ENCODE measurements at regions of chr3 and their contacts with region 1.

Region 1: DNA sequence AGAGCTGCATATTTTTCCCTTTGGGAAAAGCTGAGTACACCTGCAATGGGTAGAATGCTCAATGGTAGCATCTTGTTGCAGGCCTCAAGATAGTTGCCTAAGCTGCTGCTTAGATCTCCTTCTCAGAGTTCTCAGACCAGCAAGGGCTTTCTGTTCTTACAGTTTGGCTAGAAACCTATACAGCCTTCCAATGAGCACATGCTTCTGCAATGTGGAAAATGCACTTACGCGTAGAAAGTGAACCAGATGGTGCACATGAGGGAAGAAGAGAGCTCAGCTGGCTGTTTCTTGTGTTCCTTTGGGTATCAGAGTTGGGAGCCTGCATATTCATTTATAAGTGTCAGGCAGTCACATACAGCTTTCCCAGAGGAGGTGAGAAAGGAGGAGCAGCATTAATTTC is 136.4 kb downstream of the B3GALNT1 start:
- DNase-seq: no peak
- ATAC-seq: no peak
- H3K4me3 Mint-ChIP-seq: no peak overlapping the region
- H3K27ac Mint-ChIP-seq: no peak overlapping the region
- H3K4me1 Mint-ChIP-seq: peaks cover 9% of the 10 kb centered on the region
- H3K27me3 Mint-ChIP-seq: no peaks in the 10 kb centered on the region

Region 2: GRCh38 chr3:160956806-160957205 is 12.0 kb before region 1 on chr3:
- CTCF ChIA-PET with region 1: interaction called, 12 read pairs
- POLR2A ChIA-PET with region 1: no interaction called
- DNase-seq: no peak
- ATAC-seq: peak; percentile 60
- H3K4me3 Mint-ChIP-seq: no peak overlapping the region
- H3K27ac Mint-ChIP-seq: no peak overlapping the region
- H3K4me1 Mint-ChIP-seq: no peaks in the 10 kb centered on the region
- H3K27me3 Mint-ChIP-seq: peaks cover 14% of the 10 kb centered on the region

Measured in activated CD8-positive, alpha-beta T cell treated with anti-CD3 and anti-CD28 coated beads, Interleukin-2, amount 10 ng/mL, durations not matched to agents 7 days and 5 days (primary cell).